Left ventricle myocardium inferior (tissue), 1 donor: ENCODE measurements at regions of chr6 and their contacts with region 1.

Region 1: DNA sequence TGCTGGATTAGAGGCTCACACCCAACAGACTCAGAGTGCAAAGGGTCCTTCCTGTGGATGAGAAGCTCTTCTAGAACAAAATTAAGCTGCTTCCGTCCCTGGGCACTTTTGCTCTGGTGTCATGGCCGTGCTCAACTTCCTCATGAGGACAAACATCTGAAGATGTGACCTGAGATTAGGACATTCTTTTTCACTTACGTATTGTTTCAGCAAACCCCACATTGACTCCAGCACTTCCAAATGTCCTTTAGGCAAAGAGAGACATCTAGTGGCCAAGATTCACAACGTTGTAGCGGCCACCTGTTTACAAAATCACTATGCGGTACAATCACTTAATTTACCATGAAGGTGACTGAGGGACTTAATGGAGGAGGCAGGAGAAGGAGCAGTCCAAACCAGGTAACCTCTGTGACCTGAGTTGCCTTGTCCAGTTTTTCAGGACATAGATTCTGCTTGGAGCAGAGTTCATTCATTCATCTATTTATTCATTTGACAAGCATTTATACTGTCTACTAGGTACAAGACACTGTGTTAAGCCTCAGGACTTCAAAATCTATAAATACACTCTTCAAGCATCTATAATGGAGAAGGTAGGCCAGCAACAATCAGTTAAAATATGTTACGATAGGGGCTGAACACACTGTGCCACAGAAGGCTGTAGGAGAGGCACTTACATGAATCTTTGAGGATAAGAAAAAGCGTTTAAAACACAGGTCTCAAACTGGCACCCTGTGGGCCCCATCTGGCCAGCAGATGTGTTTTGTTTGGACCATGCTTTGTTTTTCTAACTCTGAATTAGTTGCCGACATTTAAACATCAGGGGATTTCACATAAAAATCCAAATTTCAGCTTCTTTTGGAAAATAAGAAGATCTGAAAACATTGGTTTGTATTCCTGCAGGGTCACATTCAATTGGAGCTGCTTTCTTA is 5.6 kb upstream of the ADGRF1 start:
- DNase-seq: no peak
- H3K4me3 ChIP-seq: no peak overlapping the region
- H3K27ac ChIP-seq: peak overlapping the region; percentile 51
- H3K4me1 ChIP-seq: peaks cover 21% of the 10 kb centered on the region
- H3K27me3 ChIP-seq: peaks cover 5% of the 10 kb centered on the region
- CTCF ChIP-seq: peak; percentile 85

Region 2: GRCh38 chr6:46848684-46849360 is 198.9 kb before region 1 on chr6:
- intact Hi-C with region 1: loop called (anchors 2 kb)
- DNase-seq: peak; percentile 88
- H3K4me3 ChIP-seq: peak overlapping the region; percentile 27
- H3K27ac ChIP-seq: peak overlapping the region; percentile 70
- H3K4me1 ChIP-seq: peaks cover 48% of the 10 kb centered on the region
- H3K27me3 ChIP-seq: no peaks in the 10 kb centered on the region
- CTCF ChIP-seq: peak; percentile 98

Region 3: DNA sequence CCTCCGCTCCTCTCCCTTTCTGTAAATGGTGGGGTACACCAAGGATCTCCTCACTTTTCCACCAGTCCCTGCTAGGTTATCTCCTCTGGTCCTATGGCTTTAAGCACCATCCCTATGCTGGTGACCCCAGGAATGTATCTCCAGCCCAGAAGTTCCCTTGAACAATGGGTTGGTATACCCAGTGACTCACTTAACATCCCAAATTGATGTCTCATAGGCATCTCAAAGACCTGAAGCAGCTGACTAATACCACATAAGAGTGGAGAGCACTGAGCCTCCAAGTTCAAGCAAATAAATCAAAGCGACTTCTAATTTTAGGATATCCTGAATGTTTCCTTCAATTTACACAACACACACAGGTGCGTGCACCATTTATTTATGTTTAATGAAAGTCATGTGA is 53.9 kb before region 1 on chr6:
- intact Hi-C with region 1: loop called (anchors 5 kb)
- DNase-seq: no peak
- H3K4me3 ChIP-seq: no peak overlapping the region
- H3K27ac ChIP-seq: no peak overlapping the region
- H3K4me1 ChIP-seq: peaks cover 28% of the 10 kb centered on the region
- H3K27me3 ChIP-seq: no peaks in the 10 kb centered on the region
- CTCF ChIP-seq: no peak

Region 4: GRCh38 chr6:47134476-47135189 is 86.9 kb after region 1 on chr6:
- intact Hi-C with region 1: no loop called
- DNase-seq: no peak
- H3K4me3 ChIP-seq: peak overlapping the region; percentile 1
- H3K27ac ChIP-seq: peak overlapping the region; percentile 11
- H3K4me1 ChIP-seq: peaks cover 29% of the 10 kb centered on the region
- H3K27me3 ChIP-seq: no peaks in the 10 kb centered on the region
- CTCF ChIP-seq: no peak

Region 5: GRCh38 chr6:47804821-47805220 is 757.1 kb after region 1 on chr6:
- intact Hi-C with region 1: no loop called
- DNase-seq: no peak
- H3K4me3 ChIP-seq: no peak overlapping the region
- H3K27ac ChIP-seq: no peak overlapping the region
- H3K4me1 ChIP-seq: no peaks in the 10 kb centered on the region
- H3K27me3 ChIP-seq: peaks cover 5% of the 10 kb centered on the region
- CTCF ChIP-seq: no peak